ENCODE measurements at regions of chr12 and their contacts with region 1.

Region 1: GRCh38 chr12:49188914-49189367 is at the start of gene TUBA1A:
- DNase-seq: peak; percentile 80 to 99 (median 98)
- ATAC-seq: peak; percentile 93
- H3K4me3 ChIP-seq: peak within 1 kb of the TSS; percentile 91
- H3K4me3 Mint-ChIP-seq: peak within 1 kb of the TSS; percentile 94 to 99 (median 98)
- H3K27ac ChIP-seq: peak within 1 kb of the TSS; percentile 99
- H3K27ac Mint-ChIP-seq: peak within 1 kb of the TSS; percentile 98 to 100 (median 99)
- H3K4me1 ChIP-seq: peaks cover 7 to 12% of the 10 kb centered on the region in 2 donors
- H3K4me1 Mint-ChIP-seq: peaks cover 11 to 32% (median 26%) of the 10 kb centered on the region in 7 donors
- H3K27me3 ChIP-seq: no peaks in the 10 kb centered on the region
- H3K27me3 Mint-ChIP-seq: peaks cover 0 to 5% (median 0%) of the 10 kb centered on the region in 5 donors
- total RNA-seq, gene TUBA1A: 61.8 to 492 (median 98.8) TPM

Region 2: DNA sequence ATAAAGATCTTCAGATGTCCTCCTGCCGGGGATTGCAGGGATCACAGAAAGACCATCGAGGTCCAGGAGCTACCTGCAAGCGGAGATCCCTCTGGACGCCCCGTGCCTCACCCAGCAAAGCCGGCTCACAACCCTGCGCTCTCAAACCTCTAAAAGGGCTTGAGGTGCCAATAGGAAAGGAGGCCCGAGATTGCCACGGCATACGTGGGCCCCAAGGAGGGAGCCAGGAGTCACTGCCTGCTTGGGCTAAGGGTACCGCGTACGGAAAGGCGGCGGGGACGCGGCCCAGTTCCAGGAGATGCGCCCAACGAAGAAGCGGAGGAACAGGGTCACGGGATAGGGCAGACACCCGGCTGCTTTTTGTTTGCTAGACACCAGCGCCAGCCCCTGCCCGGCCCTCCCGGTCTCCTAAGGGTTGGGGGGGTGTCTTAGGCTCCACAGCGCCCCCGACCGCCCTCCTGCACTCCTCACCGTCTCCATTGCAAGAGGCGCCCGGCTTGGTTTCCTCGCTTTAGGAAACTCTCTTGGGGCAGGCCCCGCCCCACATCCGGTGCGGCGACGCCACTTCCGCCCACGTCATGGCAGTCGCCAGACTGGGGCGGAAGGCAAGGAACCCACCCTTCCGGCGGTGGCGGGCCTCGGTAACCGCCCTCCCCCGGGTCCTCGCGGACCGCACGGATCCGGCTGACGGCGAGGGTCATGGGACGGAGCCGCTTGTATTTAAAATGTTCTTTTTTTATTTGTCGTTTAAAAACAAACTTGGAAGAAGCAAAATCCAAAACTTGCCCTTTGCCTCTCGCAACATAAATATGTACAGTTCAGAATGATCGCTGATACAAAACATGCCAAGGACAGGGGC is 170.5 kb before region 1 on chr12 and contains the start of gene PRKAG1:
- CTCF ChIA-PET with region 1: no interaction called
- POLR2A ChIA-PET with region 1: no interaction called
- intact Hi-C with region 1: loop called in 1 of 2 experiments (anchors 1 kb)
- DNase-seq: peak; percentile 93 to 98 (median 97)
- ATAC-seq: peak; percentile 94
- H3K4me3 ChIP-seq: peak within 1 kb of the TSS; percentile 78
- H3K4me3 Mint-ChIP-seq: peak within 1 kb of the TSS; percentile 79 to 98 (median 94)
- H3K27ac ChIP-seq: peak within 1 kb of the TSS; percentile 86
- H3K27ac Mint-ChIP-seq: peak within 1 kb of the TSS; percentile 96 to 100 (median 99)
- H3K4me1 ChIP-seq: peaks cover 16 to 19% of the 10 kb centered on the region in 2 donors
- H3K4me1 Mint-ChIP-seq: peaks cover 23 to 53% (median 45%) of the 10 kb centered on the region in 7 donors
- H3K27me3 ChIP-seq: no peaks in the 10 kb centered on the region
- H3K27me3 Mint-ChIP-seq: no peaks in the 10 kb centered on the region
- total RNA-seq, gene PRKAG1: 34.0 to 74.4 (median 50.6) TPM

Region 3: DNA sequence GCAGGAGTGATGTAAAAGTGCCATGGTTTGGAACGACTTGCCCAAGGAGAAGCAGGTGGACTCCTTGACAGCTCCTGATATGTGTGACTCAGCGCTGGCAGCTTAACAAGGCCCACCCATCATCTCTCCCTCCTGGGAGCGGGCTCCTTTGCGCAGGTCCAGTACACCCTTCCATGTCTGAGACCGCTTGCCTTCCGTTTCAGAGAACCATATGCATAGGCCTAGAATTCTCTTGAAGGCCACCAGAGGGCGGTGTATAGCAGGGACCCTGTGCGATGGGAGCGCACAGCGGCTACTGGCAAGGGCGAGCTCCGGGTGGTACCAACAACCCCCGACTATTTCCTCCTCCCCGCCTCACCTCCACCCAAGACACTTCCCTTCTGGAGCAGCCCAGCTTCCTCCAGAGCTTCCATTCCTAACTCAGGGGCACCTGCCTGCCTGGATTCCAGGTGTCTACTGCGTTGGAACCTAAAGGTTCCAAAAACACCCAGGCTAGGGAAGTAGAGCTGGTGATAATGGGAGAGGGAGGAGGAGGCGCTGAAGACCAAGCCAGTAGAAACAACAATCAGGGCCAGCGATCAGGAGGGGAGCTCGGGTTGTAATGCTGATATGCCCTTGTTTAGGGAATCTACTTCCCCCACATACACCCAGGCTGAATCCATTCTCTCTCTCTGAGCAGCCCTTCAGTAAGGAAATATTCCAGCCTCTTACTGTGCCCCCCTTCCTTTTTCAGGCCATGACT is 100.6 kb before region 1 on chr12:
- CTCF ChIA-PET with region 1: interaction called, 6 read pairs
- POLR2A ChIA-PET with region 1: interaction called, 9 read pairs
- intact Hi-C with region 1: loop called in 1 of 2 experiments (anchors 1 kb)
- DNase-seq: peak; percentile 39 to 73 (median 70)
- ATAC-seq: peak; percentile 94
- H3K4me3 ChIP-seq: no peak overlapping the region
- H3K4me3 Mint-ChIP-seq: peak overlapping the region in 7 of 10 donors; percentile 11 to 59 (median 48)
- H3K27ac ChIP-seq: no peak overlapping the region
- H3K27ac Mint-ChIP-seq: peak overlapping the region in 2 of 9 donors; percentile 5 to 34
- H3K4me1 ChIP-seq: peaks cover 35 to 40% of the 10 kb centered on the region in 2 donors
- H3K4me1 Mint-ChIP-seq: peaks cover 22 to 53% (median 38%) of the 10 kb centered on the region in 7 donors
- H3K27me3 ChIP-seq: peaks cover 14 to 37% of the 10 kb centered on the region in 2 donors
- H3K27me3 Mint-ChIP-seq: peaks cover 32 to 58% (median 49%) of the 10 kb centered on the region in 5 donors

Region 4: GRCh38 chr12:49170924-49171323 is 18.0 kb before region 1 on chr12:
- CTCF ChIA-PET with region 1: no interaction called
- POLR2A ChIA-PET with region 1: interaction called, 19 read pairs
- intact Hi-C with region 1: no loop called
- DNase-seq: no peak
- ATAC-seq: no peak
- H3K4me3 ChIP-seq: no peak overlapping the region
- H3K4me3 Mint-ChIP-seq: no peak overlapping the region
- H3K27ac ChIP-seq: no peak overlapping the region
- H3K27ac Mint-ChIP-seq: no peak overlapping the region
- H3K4me1 ChIP-seq: no peaks in the 10 kb centered on the region
- H3K4me1 Mint-ChIP-seq: peaks cover 0 to 3% (median 0%) of the 10 kb centered on the region in 7 donors
- H3K27me3 ChIP-seq: no peaks in the 10 kb centered on the region
- H3K27me3 Mint-ChIP-seq: peaks cover 0 to 19% (median 0%) of the 10 kb centered on the region in 5 donors

Region 5: GRCh38 chr12:49264738-49265515 is 76.0 kb after region 1 on chr12 and contains the start of gene TUBA1C:
- CTCF ChIA-PET with region 1: no interaction called
- POLR2A ChIA-PET with region 1: interaction called, 3 read pairs
- intact Hi-C with region 1: loop called (anchors 1 kb)
- DNase-seq: peak; percentile 67 to 98 (median 72)
- ATAC-seq: peak; percentile 93
- H3K4me3 ChIP-seq: peak within 1 kb of the TSS; percentile 91
- H3K4me3 Mint-ChIP-seq: peak within 1 kb of the TSS; percentile 88 to 99 (median 92)
- H3K27ac ChIP-seq: peak within 1 kb of the TSS; percentile 68
- H3K27ac Mint-ChIP-seq: peak within 1 kb of the TSS; percentile 65 to 99 (median 89)
- H3K4me1 ChIP-seq: peaks cover 16% of the 10 kb centered on the region in 2 donors
- H3K4me1 Mint-ChIP-seq: peaks cover 4 to 51% (median 11%) of the 10 kb centered on the region in 7 donors
- H3K27me3 ChIP-seq: no peaks in the 10 kb centered on the region
- H3K27me3 Mint-ChIP-seq: peaks cover 0 to 2% (median 0%) of the 10 kb centered on the region in 5 donors
- total RNA-seq, gene TUBA1C: 17.9 to 195 (median 24.1) TPM

Region 6: DNA sequence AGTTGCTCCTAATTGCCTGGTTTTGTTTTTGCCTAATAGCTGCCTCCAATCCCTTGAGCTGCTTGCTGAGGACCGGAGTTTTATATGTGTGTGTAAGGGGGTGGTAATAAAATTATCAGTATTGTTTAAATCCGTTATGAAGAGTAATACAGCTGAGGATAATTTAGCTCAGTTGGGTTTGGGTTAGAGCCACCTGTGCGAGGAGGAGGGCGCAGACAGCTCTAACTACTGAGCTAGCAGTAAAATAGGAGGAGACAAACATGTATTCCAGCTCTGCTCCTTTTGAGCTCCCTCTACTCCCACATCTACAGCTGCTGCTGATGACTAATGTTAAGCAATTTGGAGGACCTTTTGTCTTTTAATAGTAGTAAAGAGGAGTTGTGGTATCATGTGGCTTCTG is 239.9 kb after region 1 on chr12:
- CTCF ChIA-PET with region 1: no interaction called
- POLR2A ChIA-PET with region 1: no interaction called
- intact Hi-C with region 1: no loop called
- DNase-seq: no peak
- ATAC-seq: no peak
- H3K4me3 ChIP-seq: no peak overlapping the region
- H3K4me3 Mint-ChIP-seq: no peak overlapping the region
- H3K27ac ChIP-seq: no peak overlapping the region
- H3K27ac Mint-ChIP-seq: no peak overlapping the region
- H3K4me1 ChIP-seq: no peaks in the 10 kb centered on the region
- H3K4me1 Mint-ChIP-seq: peaks cover 0 to 3% (median 0%) of the 10 kb centered on the region in 7 donors
- H3K27me3 ChIP-seq: no peaks in the 10 kb centered on the region
- H3K27me3 Mint-ChIP-seq: no peaks in the 10 kb centered on the region

Region 7: GRCh38 chr12:49538510-49539403 is 349.8 kb after region 1 on chr12 and contains the start of gene KCNH3:
- CTCF ChIA-PET with region 1: no interaction called
- POLR2A ChIA-PET with region 1: interaction called, 3 read pairs
- intact Hi-C with region 1: loop called in 1 of 2 experiments (anchors 1 kb)
- DNase-seq: peak; percentile 66 to 95 (median 86)
- ATAC-seq: peak; percentile 94
- H3K4me3 ChIP-seq: peak within 1 kb of the TSS; percentile 69
- H3K4me3 Mint-ChIP-seq: peak within 1 kb of the TSS; percentile 66 to 87 (median 80)
- H3K27ac ChIP-seq: peak within 1 kb of the TSS; percentile 11
- H3K27ac Mint-ChIP-seq: peak within 1 kb of the TSS in 6 of 9 donors; percentile 43 to 81 (median 64)
- H3K4me1 ChIP-seq: peaks cover 14 to 15% of the 10 kb centered on the region in 2 donors
- H3K4me1 Mint-ChIP-seq: peaks cover 13 to 37% (median 27%) of the 10 kb centered on the region in 7 donors
- H3K27me3 ChIP-seq: no peaks in the 10 kb centered on the region
- H3K27me3 Mint-ChIP-seq: peaks cover 0 to 66% (median 6%) of the 10 kb centered on the region in 5 donors
- total RNA-seq, gene KCNH3: 0.99 to 5.3 (median 3.8) TPM